GM13977 (cell line): ENCODE measurements at regions of chr19 and their contacts with region 1.

Region 1: DNA sequence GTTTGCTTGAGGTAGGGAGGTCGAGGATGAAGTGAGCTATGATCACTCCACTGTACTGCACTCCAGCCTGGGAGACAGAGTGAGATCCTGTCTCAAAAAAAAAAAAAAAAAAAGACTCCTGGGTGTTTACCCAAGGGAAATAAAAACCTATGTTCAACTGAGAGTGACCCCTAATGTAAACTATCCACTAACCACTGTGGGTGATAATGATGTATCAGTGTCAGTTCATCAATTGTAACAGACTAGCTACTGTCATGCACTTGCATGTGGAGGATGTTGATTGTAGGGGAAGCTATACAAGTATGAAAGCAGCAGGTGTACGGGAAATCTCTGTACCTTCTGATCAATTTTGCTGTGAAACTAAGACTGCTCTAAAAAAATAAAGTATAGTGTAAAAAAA is 2.6 kb upstream of the CIB3 start:
- DNase-seq: peak; percentile 46
- CTCF ChIP-seq: no peak

Region 2: GRCh38 chr19:16051254-16052025 is 124.5 kb before region 1 on chr19:
- in situ Hi-C with region 1: loop called (anchors 10 kb)
- DNase-seq: no peak
- CTCF ChIP-seq: no peak

Region 3: DNA sequence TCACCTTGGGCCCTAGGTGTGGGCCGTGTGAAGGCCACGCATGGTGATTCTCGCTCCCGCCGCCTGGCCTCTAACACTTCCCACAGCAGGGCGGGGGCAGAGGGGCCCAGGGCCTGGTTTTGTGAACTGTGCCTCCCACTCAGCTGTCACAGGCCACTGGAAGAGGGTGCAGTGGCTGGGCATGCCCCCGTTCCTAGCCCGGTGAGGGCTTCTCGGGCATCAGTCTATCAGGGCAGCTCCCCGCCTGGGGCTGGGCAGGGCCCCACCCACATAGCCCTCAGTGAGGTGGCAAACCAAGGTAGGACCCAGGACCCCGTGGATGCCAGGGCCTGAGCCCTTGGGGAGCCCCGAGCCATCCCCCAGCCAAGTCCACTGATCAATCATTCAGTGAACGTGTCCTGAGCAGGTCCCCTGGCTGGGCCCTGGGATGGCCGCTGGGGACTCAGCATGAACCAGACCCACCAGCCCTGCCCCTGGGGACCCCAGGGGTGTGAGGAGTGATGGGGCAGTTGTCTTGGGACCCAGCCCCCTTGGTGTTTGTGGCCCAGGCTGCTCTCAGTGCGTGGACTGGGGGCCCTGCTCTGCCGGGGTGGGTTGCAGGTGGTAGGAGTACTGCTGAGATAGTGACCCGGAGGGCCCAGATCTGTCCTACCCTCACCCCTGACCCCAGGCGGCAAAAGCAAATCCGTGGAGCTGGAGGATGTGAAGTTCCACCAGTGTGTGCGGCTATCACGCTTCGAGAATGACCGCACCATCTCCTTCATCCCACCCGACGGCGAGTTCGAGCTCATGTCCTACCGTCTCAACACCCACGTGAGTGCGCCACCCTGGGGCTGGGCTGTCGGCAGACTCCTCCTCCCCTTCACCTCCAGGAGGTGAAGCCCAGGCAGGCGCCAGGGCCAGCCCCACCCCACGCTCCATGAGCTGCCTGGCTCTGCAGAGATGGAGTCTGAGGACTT is 51.2 kb after region 1 on chr19:
- in situ Hi-C with region 1: no loop called
- DNase-seq: no peak
- CTCF ChIP-seq: no peak